ENCODE measurements at regions of chr11 and their contacts with region 1.

Region 1: DNA sequence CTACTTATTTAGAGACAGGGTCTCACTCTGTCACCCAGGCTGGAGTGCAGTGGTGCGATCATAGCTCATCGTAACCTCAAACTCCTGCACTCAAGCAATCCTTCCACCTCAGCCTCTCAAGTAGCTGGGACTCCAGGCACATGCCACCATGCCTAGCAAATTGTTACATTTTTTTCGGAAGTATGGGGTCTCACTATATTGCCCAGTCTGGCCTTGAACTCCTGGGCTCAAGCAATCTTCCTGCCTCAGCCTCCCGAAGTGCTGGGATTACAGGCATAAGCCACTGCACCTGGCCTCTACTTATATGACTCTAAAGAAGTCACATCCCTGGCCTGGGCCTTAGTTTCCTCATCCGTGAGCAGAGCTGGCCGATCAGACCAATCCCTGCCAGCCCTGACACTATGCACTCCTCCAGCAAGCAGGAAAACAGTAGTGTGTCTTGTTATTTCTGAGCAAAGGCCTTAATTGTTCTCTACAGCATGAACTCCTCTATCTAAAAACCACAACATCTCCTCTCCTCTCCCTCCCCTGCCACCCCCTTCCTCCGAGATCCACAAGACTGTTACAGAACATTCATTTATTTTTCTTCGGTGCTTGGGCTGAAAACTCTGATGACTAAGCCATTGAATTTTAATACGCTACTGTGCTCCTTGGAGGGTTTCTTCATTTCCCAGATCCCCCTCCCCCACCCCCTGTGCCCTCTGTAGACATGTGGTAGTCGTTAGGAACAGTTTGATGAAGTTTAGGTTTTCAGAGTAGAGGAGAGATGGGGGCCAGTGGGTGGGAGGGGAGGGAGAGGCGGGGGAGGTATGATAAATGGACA is 91.5 kb downstream of the ABTB2 start:
- DNase-seq: peak; percentile 35 to 64
- H3K4me3 ChIP-seq: no peak overlapping the region
- H3K27ac ChIP-seq: peak overlapping the region; percentile 48
- H3K4me1 ChIP-seq: peaks cover 70% of the 10 kb centered on the region
- H3K27me3 ChIP-seq: no peaks in the 10 kb centered on the region
- CTCF ChIP-seq: no peak

Region 2: DNA sequence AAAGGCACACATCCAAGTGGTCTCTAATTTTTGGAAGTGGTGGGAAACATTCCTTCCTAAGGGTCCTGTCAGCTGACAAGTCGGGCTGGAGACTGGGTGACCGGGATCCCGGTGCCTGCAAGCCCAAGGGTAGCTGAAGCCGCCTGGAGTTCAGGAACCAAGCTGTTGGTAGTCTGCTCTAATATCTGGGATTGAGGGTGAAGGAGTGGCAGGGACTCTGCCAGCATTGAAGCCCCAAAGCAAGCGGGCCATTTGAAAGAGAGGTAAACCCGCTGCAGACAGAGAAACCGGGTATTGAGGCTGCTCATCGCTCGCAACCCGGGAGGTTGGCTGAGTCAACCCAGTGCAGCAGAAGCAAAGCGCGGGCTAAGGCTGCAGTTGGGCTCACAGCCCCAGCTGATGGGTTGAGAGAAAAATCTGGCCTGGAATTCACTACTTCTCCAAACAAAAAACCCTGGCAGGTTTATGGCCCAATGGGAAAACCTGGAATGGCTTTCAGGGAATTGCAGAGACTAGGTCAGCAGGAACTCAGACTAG is 463.8 kb before region 1 on chr11:
- CTCF ChIA-PET with region 1: no interaction called
- POLR2A ChIA-PET with region 1: interaction called, 12 read pairs
- intact Hi-C with region 1: no loop called
- DNase-seq: peak; percentile 53 to 70
- H3K4me3 ChIP-seq: peak overlapping the region; percentile 35; the same call in 1 of the 2 replicates
- H3K27ac ChIP-seq: no peak overlapping the region
- H3K4me1 ChIP-seq: 0 out of 2 replicates have a peak, but pooled peaks cover 5% of the 10 kb centered on the region
- H3K27me3 ChIP-seq: no peaks in the 10 kb centered on the region
- CTCF ChIP-seq: no peak

Region 3: GRCh38 chr11:34182921-34183685 is 83.2 kb before region 1 on chr11:
- CTCF ChIA-PET with region 1: interaction called, 21 read pairs
- POLR2A ChIA-PET with region 1: interaction called, 6 read pairs
- intact Hi-C with region 1: no loop called
- DNase-seq: no peak
- H3K4me3 ChIP-seq: no peak overlapping the region
- H3K27ac ChIP-seq: no peak overlapping the region
- H3K4me1 ChIP-seq: no peaks in the 10 kb centered on the region
- H3K27me3 ChIP-seq: no peaks in the 10 kb centered on the region
- CTCF ChIP-seq: no peak

Region 4: GRCh38 chr11:34208266-34209135 is 57.8 kb before region 1 on chr11:
- CTCF ChIA-PET with region 1: no interaction called
- POLR2A ChIA-PET with region 1: no interaction called
- intact Hi-C with region 1: loop called (anchors 5 kb)
- DNase-seq: peak; percentile 62 to 94
- H3K4me3 ChIP-seq: no peak overlapping the region
- H3K27ac ChIP-seq: peak overlapping the region; percentile 63
- H3K4me1 ChIP-seq: peaks cover 62% of the 10 kb centered on the region
- H3K27me3 ChIP-seq: no peaks in the 10 kb centered on the region
- CTCF ChIP-seq: no peak

Region 5: DNA sequence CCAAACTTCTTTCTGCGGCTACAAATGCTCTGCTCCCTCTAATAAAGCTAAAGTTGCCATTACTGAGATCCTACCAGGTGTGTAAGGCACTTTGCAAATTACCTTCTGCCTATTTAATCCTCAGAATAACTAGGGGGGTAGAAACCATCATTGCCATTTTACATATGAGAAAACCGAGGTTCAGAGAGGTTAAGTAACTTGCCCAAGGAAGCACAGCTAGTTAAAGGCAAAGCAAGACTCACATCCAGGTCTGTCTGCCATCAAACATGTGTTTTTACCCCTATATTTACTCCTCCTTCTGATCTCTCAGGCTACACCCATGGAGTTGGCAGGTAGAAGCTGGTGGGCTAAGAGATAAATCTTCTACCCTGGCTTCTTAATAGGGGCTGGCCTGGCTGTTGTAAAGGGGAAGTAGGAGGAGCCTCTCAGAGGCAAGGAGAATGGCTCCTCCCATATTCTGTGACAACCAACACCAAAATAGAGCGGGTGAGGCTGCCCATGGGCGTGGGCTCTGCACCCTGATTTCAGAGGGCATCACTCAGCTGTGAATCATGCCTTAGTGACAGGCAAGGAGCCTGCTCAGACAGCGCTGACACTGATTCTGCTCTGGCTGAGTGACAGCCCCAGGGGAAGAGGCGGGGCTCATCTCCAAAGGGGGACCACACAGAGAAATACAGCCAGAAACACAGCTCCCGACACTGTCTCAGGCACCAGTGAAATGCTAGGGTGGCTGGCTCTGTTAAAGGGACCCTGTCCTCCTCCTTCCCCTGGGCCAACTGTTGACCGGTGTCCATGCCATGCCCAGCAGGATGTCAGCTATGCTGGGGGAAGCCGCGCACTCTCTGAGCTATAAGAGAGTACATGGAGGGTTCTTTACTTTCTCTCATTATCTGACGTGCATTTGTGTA is 15.3 kb before region 1 on chr11:
- CTCF ChIA-PET with region 1: interaction called, 3 read pairs
- POLR2A ChIA-PET with region 1: interaction called, 3 read pairs
- intact Hi-C with region 1: loop called (anchors 1 kb)
- DNase-seq: peak; percentile 81 to 89
- H3K4me3 ChIP-seq: no peak overlapping the region
- H3K27ac ChIP-seq: no peak overlapping the region
- H3K4me1 ChIP-seq: peaks cover 53% of the 10 kb centered on the region
- H3K27me3 ChIP-seq: no peaks in the 10 kb centered on the region
- CTCF ChIP-seq: no peak

Region 6: GRCh38 chr11:34395916-34396550 is 129.7 kb after region 1 on chr11:
- CTCF ChIA-PET with region 1: no interaction called
- POLR2A ChIA-PET with region 1: no interaction called
- intact Hi-C with region 1: no loop called
- DNase-seq: peak; percentile 51 to 95
- H3K4me3 ChIP-seq: no peak overlapping the region
- H3K27ac ChIP-seq: peak overlapping the region; percentile 77
- H3K4me1 ChIP-seq: peaks cover 33% of the 10 kb centered on the region
- H3K27me3 ChIP-seq: no peaks in the 10 kb centered on the region
- CTCF ChIP-seq: no peak

Region 7: GRCh38 chr11:34836958-34837856 is 570.9 kb after region 1 on chr11:
- CTCF ChIA-PET with region 1: no interaction called
- POLR2A ChIA-PET with region 1: no interaction called
- intact Hi-C with region 1: no loop called
- DNase-seq: no peak
- H3K4me3 ChIP-seq: no peak overlapping the region
- H3K27ac ChIP-seq: no peak overlapping the region
- H3K4me1 ChIP-seq: no peaks in the 10 kb centered on the region
- H3K27me3 ChIP-seq: no peaks in the 10 kb centered on the region
- CTCF ChIP-seq: no peak